Thyroid gland (tissue), 4 donors: ENCODE measurements at regions of chr6 and their contacts with region 1.

Region 1: DNA sequence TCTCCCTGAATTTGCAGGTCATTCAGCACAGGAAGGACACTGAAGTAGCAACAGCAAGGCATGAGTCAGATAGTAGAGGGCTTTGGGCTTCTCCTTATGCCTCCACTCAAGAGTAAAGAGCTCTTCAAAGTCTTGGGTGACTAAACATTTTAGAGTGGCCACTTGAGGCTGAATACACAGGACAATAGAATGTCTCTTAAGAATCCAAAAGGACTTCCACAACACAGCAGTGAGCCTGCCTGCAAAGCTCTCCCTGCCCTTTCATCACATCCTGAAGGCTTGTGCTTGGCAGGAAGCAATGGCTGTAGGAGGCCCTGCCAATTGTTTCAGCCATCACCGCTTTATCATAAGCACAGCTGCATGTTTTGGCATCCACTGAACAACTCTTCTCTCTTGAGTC is 36.8 kb downstream of the FOXQ1 start:
- DNase-seq: peak; percentile 79 to 84
- H3K4me3 ChIP-seq: no peak overlapping the region
- H3K27ac ChIP-seq: peak overlapping the region in 1 of 3 donors; percentile 44
- H3K4me1 ChIP-seq: peaks cover 18 to 36% of the 10 kb centered on the region in 2 donors
- H3K27me3 ChIP-seq: no peaks in the 10 kb centered on the region
- CTCF ChIP-seq: peak in 1 of 6 experiments; percentile 9
- POLR2A ChIP-seq: no peak

Region 2: DNA sequence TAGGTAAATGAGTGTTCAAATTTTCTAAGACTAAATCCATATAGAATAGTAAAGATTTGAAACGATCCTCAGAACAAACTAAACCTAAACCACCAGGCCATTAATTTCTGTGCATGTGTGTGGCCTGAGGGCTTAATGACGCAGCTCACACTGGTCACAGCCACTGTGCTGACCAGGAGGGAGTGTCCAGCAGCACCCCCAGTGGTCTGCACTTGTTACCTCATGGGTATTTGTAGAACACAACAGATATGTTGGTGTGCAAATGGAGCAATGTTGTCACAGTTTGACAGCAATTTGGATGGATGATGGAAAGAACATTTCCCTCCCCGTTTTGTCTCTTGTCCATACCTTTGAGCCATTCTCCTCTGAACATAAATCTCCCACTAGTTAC is 533.3 kb before region 1 on chr6:
- intact Hi-C with region 1: no loop called
- DNase-seq: no peak
- H3K4me3 ChIP-seq: no peak overlapping the region
- H3K27ac ChIP-seq: no peak overlapping the region
- H3K4me1 ChIP-seq: peaks cover 0 to 13% of the 10 kb centered on the region in 2 donors
- H3K27me3 ChIP-seq: no peaks in the 10 kb centered on the region
- CTCF ChIP-seq: peak in 1 of 6 experiments; percentile 24
- POLR2A ChIP-seq: no peak

Region 3: GRCh38 chr6:912871-913835 is 435.5 kb before region 1 on chr6:
- intact Hi-C with region 1: loop called (anchors 10 kb)
- DNase-seq: peak; percentile 59 to 67
- H3K4me3 ChIP-seq: no peak overlapping the region
- H3K27ac ChIP-seq: no peak overlapping the region
- H3K4me1 ChIP-seq: peaks cover 3 to 7% of the 10 kb centered on the region in 2 donors
- H3K27me3 ChIP-seq: no peaks in the 10 kb centered on the region
- CTCF ChIP-seq: peak in 5 of 6 experiments; percentile 17 to 72 (median 56)
- POLR2A ChIP-seq: no peak

Region 4: GRCh38 chr6:1170794-1171193 is 177.9 kb before region 1 on chr6:
- intact Hi-C with region 1: no loop called
- DNase-seq: peak; percentile 62
- H3K4me3 ChIP-seq: no peak overlapping the region
- H3K27ac ChIP-seq: no peak overlapping the region
- H3K4me1 ChIP-seq: no peaks in the 10 kb centered on the region
- H3K27me3 ChIP-seq: no peaks in the 10 kb centered on the region
- CTCF ChIP-seq: no peak
- POLR2A ChIP-seq: no peak

Region 5: DNA sequence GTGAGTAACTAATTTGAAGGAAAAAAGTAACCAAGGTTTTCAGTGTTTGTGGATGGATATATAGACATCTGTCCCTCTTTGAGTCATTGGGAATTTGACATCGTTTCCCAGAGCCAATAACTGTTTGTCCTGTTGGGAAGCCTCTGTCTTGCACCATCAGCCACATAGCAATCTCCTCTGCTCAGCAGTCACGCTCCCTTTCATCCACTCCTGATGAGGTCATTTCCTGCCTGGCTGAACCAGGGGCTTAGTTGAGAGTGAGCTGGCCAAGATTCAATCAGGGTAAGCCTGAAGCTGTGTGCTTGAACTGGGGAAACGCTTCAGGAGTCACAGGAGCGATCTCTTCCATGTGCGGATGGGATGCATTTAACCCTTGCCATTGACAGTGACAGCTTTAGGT is 158.3 kb before region 1 on chr6:
- intact Hi-C with region 1: no loop called
- DNase-seq: peak; percentile 88 to 89
- H3K4me3 ChIP-seq: no peak overlapping the region
- H3K27ac ChIP-seq: peak overlapping the region; percentile 62 to 90 (median 79)
- H3K4me1 ChIP-seq: peaks cover 18 to 52% of the 10 kb centered on the region in 2 donors
- H3K27me3 ChIP-seq: no peaks in the 10 kb centered on the region
- CTCF ChIP-seq: no peak
- POLR2A ChIP-seq: peak in 1 of 2 donors; percentile 24

Region 6: GRCh38 chr6:1449896-1450295 is 101.2 kb after region 1 on chr6:
- intact Hi-C with region 1: no loop called
- DNase-seq: no peak
- H3K4me3 ChIP-seq: no peak overlapping the region
- H3K27ac ChIP-seq: no peak overlapping the region
- H3K4me1 ChIP-seq: no peaks in the 10 kb centered on the region
- H3K27me3 ChIP-seq: no peaks in the 10 kb centered on the region
- CTCF ChIP-seq: no peak
- POLR2A ChIP-seq: no peak